ENCODE measurements at regions of chr4 and their contacts with region 1.

Region 1: DNA sequence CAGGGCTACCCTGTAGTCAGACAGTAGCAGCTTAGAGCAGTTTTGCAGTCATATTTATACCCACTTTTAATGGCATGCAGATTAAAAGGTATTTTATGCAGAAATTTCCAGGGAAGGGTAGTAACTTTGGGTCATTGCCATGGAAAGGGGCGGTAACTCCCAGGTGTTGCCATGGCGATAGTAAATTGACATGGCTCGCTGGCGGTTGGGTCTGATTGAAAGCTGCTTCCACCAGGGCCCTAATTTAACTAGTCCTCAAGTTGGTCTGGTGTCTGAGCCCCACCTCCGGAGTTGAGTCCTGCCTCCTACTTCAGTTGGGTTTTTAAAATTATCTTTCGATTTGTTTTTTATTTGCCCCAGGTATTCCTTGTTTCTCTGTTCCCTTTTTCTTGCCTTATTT is 70.1 kb downstream of the NAA11 start:
- DNase-seq: no peak
- ATAC-seq: no peak
- H3K4me3 ChIP-seq: no peak overlapping the region
- H3K27ac ChIP-seq: no peak overlapping the region
- H3K4me1 ChIP-seq: no peaks in the 10 kb centered on the region
- H3K27me3 ChIP-seq: no peaks in the 10 kb centered on the region
- CTCF ChIP-seq: no peak

Region 2: GRCh38 chr4:77899607-77900006 is 1356.2 kb before region 1 on chr4:
- intact Hi-C with region 1: loop called in 1 of 2 experiments (anchors 5 kb)
- DNase-seq: no peak
- ATAC-seq: no peak
- H3K4me3 ChIP-seq: no peak overlapping the region
- H3K27ac ChIP-seq: no peak overlapping the region
- H3K4me1 ChIP-seq: no peaks in the 10 kb centered on the region
- H3K27me3 ChIP-seq: no peaks in the 10 kb centered on the region
- CTCF ChIP-seq: no peak

Region 3: DNA sequence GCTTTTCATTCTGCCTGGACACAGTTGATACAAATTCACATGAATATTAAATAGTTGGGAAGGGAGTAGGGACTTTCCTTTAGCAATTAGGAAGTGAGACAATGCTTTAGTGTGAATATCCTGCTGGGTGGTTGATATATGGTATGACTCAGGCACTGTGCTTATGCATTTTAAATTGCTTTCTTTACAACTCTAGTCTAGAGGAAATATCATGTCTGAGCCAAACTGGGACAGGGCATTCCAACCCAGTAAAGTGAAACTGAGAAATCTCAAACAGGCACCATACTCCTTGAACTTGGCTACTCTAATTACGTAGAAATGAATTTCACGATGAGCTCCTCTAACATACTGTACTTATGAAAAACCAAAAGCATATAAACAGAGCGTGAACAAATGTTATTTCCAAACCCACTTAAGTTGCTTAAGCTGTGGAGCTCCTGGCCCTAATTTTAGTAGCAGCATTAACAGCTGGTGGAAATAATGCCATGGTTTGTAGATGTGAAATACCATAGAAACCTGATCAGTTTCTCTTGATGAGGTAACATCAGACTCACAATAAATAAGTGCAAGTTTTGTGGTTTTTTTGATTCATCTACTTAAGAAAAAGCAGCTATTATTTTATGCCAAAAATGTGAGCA is 395.1 kb after region 1 on chr4:
- intact Hi-C with region 1: no loop called
- DNase-seq: no peak
- ATAC-seq: peak; percentile 23 to 50 (median 48)
- H3K4me3 ChIP-seq: peak overlapping the region; percentile 12
- H3K27ac ChIP-seq: no peak overlapping the region
- H3K4me1 ChIP-seq: peaks cover 18% of the 10 kb centered on the region
- H3K27me3 ChIP-seq: no peaks in the 10 kb centered on the region
- CTCF ChIP-seq: no peak